ENCODE measurements at regions of chr7 and their contacts with region 1.

Region 1: DNA sequence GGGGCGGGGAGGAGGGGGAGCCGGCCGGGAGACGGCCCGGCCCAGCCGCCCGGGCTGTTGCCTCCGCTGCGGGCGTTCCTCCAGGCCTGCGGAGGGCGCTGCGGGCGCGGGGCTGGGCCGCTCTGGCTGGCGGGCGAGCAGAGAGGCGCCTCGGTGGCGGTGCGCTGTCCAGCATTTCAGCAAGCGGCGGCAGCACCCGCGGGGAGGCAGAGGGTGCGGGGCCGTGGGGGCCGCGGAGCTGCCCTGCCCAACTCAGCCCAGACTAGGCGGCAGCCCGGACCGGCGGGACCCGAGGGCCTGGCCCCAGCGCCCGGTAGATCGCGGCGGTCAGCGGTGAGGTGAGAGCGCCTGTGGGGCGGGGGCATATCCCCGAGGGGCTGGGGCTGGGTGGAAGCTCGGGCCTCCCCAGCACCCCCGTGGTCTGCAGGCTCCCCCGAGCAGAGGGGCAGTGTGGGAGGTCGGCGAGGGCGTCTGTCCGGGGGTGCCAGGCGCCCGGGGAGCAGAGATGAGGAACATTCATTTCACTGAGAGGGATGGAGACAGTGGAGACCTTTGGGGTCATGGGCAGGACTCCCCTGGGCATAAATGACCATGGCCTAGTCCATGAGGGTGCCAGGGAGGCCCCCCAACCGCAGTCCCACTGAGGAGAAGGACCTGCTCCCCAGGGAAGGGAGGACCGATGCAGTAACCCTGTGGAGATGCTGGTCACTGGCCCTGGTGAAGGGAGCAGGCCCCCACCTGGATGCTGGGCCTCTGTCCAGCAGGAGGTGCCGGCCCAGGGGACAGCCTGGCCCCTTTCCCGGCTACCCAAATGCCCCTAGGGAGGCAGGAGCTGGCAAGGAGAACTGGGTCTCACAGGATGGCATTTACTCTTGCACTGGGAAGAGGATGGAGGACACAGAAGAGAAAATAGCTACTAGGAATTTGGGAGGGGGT is at the start of gene SRRM3:
- DNase-seq: peak; percentile 66 to 95 (median 84)
- ATAC-seq: peak; percentile 100
- H3K4me3 ChIP-seq: no peak within 1 kb of the TSS
- H3K4me3 Mint-ChIP-seq: no peak within 1 kb of the TSS
- H3K27ac ChIP-seq: no peak within 1 kb of the TSS
- H3K27ac Mint-ChIP-seq: peak within 1 kb of the TSS in 1 of 9 donors; percentile 38
- H3K4me1 ChIP-seq: no peaks in the 10 kb centered on the region
- H3K4me1 Mint-ChIP-seq: peaks cover 0 to 2% (median 0%) of the 10 kb centered on the region in 7 donors
- H3K27me3 ChIP-seq: no peaks in the 10 kb centered on the region
- H3K27me3 Mint-ChIP-seq: peaks cover 3 to 42% (median 23%) of the 10 kb centered on the region in 5 donors
- total RNA-seq, gene SRRM3: not detected

Region 2: DNA sequence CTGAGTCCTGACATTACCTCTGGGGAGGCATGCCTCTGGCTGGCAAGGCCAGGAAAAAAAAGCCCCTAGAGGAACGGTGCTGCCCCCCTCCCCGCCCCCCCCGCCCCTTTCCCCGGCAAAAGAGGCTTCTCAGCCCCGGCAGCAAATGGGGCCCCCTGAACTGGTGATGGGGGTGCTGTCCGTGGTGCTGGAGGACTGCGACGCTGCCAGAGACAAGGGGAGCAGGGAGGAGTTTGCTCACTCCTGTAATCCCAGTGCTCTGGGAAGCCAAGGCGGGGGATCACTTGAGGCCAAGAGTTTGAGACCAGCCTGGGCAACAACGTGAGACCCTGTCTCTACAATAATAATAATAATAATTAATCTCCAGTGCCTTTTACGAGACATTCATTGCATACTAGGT is 23.4 kb after region 1 on chr7:
- CTCF ChIA-PET with region 1: no interaction called
- POLR2A ChIA-PET with region 1: no interaction called
- intact Hi-C with region 1: loop called in 1 of 2 experiments (anchors 2 kb)
- DNase-seq: peak in 4 of 9 donors; percentile 10 to 44 (median 18)
- ATAC-seq: no peak
- H3K4me3 ChIP-seq: no peak overlapping the region
- H3K4me3 Mint-ChIP-seq: no peak overlapping the region
- H3K27ac ChIP-seq: no peak overlapping the region
- H3K27ac Mint-ChIP-seq: no peak overlapping the region
- H3K4me1 ChIP-seq: no peaks in the 10 kb centered on the region
- H3K4me1 Mint-ChIP-seq: peaks cover 0 to 5% (median 0%) of the 10 kb centered on the region in 7 donors
- H3K27me3 ChIP-seq: no peaks in the 10 kb centered on the region
- H3K27me3 Mint-ChIP-seq: peaks cover 15 to 50% (median 48%) of the 10 kb centered on the region in 5 donors